MCF 10A (cell line): ENCODE measurements at regions of chr3 and their contacts with region 1.

Region 1: DNA sequence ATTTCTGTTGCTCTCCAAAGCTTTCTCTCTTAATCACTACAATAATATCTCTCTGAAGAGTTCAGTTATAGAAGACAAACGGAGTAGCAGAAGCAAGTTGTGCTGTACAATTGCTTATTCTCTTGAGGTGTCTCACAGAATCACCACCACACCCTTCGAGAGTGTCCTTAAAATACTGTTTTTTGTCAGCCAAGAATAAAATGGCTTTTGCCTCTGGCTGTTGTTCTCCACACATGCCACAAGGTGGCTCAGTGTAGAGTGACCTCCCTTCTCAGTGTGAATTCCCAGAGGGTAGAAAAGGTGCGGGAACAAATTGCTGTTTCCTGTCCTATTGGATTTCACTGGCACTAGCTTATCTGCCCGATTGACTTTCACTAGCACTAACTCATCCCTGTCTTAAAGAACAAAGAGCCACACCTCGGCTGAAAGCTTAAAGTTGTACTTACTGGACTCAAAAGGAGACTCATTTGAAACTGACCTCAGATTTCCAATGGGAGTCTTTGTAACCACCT is 134.2 kb upstream of the SATB1 start:
- DNase-seq: peak; percentile 72
- H3K4me3 Mint-ChIP-seq: no peak overlapping the region
- H3K27ac Mint-ChIP-seq: no peak overlapping the region
- H3K4me1 Mint-ChIP-seq: no peaks in the 10 kb centered on the region
- H3K27me3 Mint-ChIP-seq: peaks cover 45% of the 10 kb centered on the region
- CTCF ChIP-seq: peak; percentile 74

Region 2: GRCh38 chr3:17894434-17895060 is 664.8 kb before region 1 on chr3:
- CTCF ChIA-PET with region 1: no interaction called
- POLR2A ChIA-PET with region 1: no interaction called
- intact Hi-C with region 1: loop called (anchors 5 kb)
- DNase-seq: peak; percentile 75
- H3K4me3 Mint-ChIP-seq: no peak overlapping the region
- H3K27ac Mint-ChIP-seq: no peak overlapping the region
- H3K4me1 Mint-ChIP-seq: peaks cover 9% of the 10 kb centered on the region
- H3K27me3 Mint-ChIP-seq: no peaks in the 10 kb centered on the region
- CTCF ChIP-seq: peak; percentile 63

Region 3: DNA sequence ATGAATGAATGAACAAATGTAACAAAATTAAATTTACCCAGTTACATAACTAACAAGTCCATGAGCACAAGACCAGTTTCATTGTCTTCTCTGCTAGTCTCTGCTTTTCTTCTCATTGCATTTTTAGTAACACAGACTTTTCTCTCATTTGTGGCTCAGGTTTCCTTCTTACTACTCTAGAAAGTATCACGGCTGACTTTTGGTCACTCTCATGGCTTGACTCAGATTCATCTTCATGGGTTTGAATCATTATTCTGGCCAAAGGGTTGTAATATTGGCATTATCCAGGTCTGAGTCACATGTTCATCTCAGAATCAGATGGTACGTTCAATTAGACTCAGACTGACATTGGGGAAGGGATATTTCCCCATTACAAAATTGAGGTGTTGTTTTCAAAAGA is 12.8 kb before region 1 on chr3:
- CTCF ChIA-PET with region 1: interaction called, 10 read pairs
- POLR2A ChIA-PET with region 1: no interaction called
- intact Hi-C with region 1: no loop called
- DNase-seq: no peak
- H3K4me3 Mint-ChIP-seq: no peak overlapping the region
- H3K27ac Mint-ChIP-seq: no peak overlapping the region
- H3K4me1 Mint-ChIP-seq: no peaks in the 10 kb centered on the region
- H3K27me3 Mint-ChIP-seq: peaks cover 15% of the 10 kb centered on the region
- CTCF ChIP-seq: no peak

Region 4: DNA sequence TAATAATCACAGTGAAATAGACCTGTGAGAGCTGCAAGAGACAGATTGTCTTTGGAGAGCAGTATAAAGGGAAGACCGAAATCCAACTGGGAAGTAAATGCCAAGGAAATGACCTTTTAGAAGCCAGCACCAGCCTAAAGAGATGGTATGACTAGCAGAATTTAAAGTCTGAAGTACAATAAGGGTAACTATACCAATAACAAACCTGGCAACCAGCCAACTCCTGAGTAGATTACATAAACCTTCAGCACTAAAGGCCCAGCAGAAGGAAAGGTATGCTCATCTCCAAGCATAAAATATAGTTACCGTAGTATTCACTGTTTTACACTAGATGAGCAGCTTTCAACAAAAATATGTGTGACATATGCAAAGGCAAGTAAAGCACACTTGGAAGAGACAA is 20.9 kb after region 1 on chr3:
- CTCF ChIA-PET with region 1: interaction called, 13 read pairs
- POLR2A ChIA-PET with region 1: no interaction called
- intact Hi-C with region 1: no loop called
- DNase-seq: peak; percentile 41
- H3K4me3 Mint-ChIP-seq: no peak overlapping the region
- H3K27ac Mint-ChIP-seq: no peak overlapping the region
- H3K4me1 Mint-ChIP-seq: peaks cover 5% of the 10 kb centered on the region
- H3K27me3 Mint-ChIP-seq: peaks cover 9% of the 10 kb centered on the region
- CTCF ChIP-seq: no peak

Region 5: DNA sequence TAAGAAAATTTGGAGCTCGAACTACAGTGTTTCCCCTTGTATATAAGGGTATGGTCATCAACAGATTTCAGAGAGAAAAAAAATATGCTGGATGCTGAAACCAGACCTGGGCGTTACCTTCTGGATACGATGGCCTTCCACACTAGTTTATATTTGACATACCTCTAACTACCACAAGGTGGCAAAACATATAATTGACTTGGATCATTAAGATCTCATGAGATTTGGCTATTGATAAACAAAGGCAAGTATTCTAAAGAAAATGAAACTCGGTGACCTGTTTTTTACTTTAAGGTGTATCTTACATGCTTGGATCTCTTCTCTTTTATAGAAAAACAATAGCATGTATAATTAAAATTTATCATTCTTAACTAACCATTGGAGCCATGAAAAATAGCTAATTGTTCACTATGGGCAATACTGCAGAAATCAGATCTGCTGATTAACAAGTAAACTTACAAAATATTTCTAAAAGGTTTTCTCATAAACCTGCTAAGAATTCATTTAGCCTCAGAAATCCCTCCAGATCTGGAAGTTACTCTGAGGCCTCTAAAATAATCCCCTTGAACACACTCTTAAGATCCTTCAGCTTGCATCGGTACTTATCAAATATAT is 288.3 kb after region 1 on chr3:
- CTCF ChIA-PET with region 1: no interaction called
- POLR2A ChIA-PET with region 1: no interaction called
- intact Hi-C with region 1: loop called (anchors 5 kb)
- DNase-seq: peak; percentile 44
- H3K4me3 Mint-ChIP-seq: no peak overlapping the region
- H3K27ac Mint-ChIP-seq: no peak overlapping the region
- H3K4me1 Mint-ChIP-seq: no peaks in the 10 kb centered on the region
- H3K27me3 Mint-ChIP-seq: no peaks in the 10 kb centered on the region
- CTCF ChIP-seq: peak; percentile 22